Activated naive CD4-positive, alpha-beta T cell treated with anti-CD3 and anti-CD28 coated beads, Interleukin-2, amount 10 ng/mL, durations not matched to agents 7 days and 5 days (primary cell): ENCODE measurements at regions of chr19 and their contacts with region 1.

Region 1: GRCh38 chr19:42280192-42281145 is 11.4 kb downstream of the CIC start:
- DNase-seq: peak; percentile 92
- H3K4me3 Mint-ChIP-seq: peak overlapping the region; percentile 83
- H3K27ac Mint-ChIP-seq: peak overlapping the region; percentile 82
- H3K4me1 Mint-ChIP-seq: peaks cover 44% of the 10 kb centered on the region
- H3K27me3 Mint-ChIP-seq: no peaks in the 10 kb centered on the region

Region 2: GRCh38 chr19:42132851-42133528 is 147.5 kb before region 1 on chr19:
- CTCF ChIA-PET with region 1: interaction called, 23 read pairs
- DNase-seq: peak; percentile 84
- H3K4me3 Mint-ChIP-seq: peak overlapping the region; percentile 78
- H3K27ac Mint-ChIP-seq: peak overlapping the region; percentile 84
- H3K4me1 Mint-ChIP-seq: peaks cover 65% of the 10 kb centered on the region
- H3K27me3 Mint-ChIP-seq: peaks cover 4% of the 10 kb centered on the region

Region 3: GRCh38 chr19:42244347-42245220 is 35.9 kb before region 1 on chr19:
- CTCF ChIA-PET with region 1: interaction called, 57 read pairs
- DNase-seq: peak; percentile 96
- H3K4me3 Mint-ChIP-seq: peak overlapping the region; percentile 96
- H3K27ac Mint-ChIP-seq: peak overlapping the region; percentile 93
- H3K4me1 Mint-ChIP-seq: peaks cover 57% of the 10 kb centered on the region
- H3K27me3 Mint-ChIP-seq: no peaks in the 10 kb centered on the region

Region 4: GRCh38 chr19:42252365-42253244 is 27.9 kb before region 1 on chr19:
- CTCF ChIA-PET with region 1: interaction called, 57 read pairs
- DNase-seq: no peak
- H3K4me3 Mint-ChIP-seq: peak overlapping the region; percentile 87
- H3K27ac Mint-ChIP-seq: peak overlapping the region; percentile 94
- H3K4me1 Mint-ChIP-seq: peaks cover 41% of the 10 kb centered on the region
- H3K27me3 Mint-ChIP-seq: peaks cover 23% of the 10 kb centered on the region

Region 5: GRCh38 chr19:42268704-42269477 is 11.6 kb before region 1 on chr19 and contains the start of gene CIC:
- CTCF ChIA-PET with region 1: interaction called, 34 read pairs
- DNase-seq: peak; percentile 99
- H3K4me3 Mint-ChIP-seq: no peak within 1 kb of the TSS
- H3K27ac Mint-ChIP-seq: peak within 1 kb of the TSS; percentile 98
- H3K4me1 Mint-ChIP-seq: peaks cover 31% of the 10 kb centered on the region
- H3K27me3 Mint-ChIP-seq: no peaks in the 10 kb centered on the region

Region 6: GRCh38 chr19:42295831-42296525 is 15.5 kb after region 1 on chr19:
- CTCF ChIA-PET with region 1: interaction called, 12 read pairs
- DNase-seq: peak; percentile 92
- H3K4me3 Mint-ChIP-seq: no peak overlapping the region
- H3K27ac Mint-ChIP-seq: peak overlapping the region; percentile 34
- H3K4me1 Mint-ChIP-seq: peaks cover 14% of the 10 kb centered on the region
- H3K27me3 Mint-ChIP-seq: no peaks in the 10 kb centered on the region

Region 7: DNA sequence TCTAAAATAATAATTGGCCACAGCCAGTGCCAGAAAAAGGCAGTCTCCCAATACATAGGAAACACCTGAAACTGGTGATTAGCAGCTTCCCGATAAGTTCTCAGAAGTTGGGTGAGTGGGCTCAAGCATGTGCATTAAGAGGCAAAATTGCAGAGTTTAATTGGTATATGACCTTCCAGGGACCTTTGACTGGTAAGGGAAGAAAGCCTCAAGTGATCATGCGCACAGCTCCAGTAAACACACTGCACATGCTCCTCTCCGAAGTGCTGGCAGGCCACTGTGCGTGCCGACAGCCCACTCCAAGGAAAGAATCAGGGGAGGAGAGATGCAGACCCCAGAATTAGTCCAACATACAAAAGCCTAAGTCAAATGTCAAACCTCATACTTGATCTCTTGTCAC is 333.2 kb after region 1 on chr19:
- CTCF ChIA-PET with region 1: no interaction called
- DNase-seq: no peak
- H3K4me3 Mint-ChIP-seq: no peak overlapping the region
- H3K27ac Mint-ChIP-seq: no peak overlapping the region
- H3K4me1 Mint-ChIP-seq: no peaks in the 10 kb centered on the region
- H3K27me3 Mint-ChIP-seq: no peaks in the 10 kb centered on the region